ENCODE measurements at regions of chr4 and their contacts with region 1.

Region 1: DNA sequence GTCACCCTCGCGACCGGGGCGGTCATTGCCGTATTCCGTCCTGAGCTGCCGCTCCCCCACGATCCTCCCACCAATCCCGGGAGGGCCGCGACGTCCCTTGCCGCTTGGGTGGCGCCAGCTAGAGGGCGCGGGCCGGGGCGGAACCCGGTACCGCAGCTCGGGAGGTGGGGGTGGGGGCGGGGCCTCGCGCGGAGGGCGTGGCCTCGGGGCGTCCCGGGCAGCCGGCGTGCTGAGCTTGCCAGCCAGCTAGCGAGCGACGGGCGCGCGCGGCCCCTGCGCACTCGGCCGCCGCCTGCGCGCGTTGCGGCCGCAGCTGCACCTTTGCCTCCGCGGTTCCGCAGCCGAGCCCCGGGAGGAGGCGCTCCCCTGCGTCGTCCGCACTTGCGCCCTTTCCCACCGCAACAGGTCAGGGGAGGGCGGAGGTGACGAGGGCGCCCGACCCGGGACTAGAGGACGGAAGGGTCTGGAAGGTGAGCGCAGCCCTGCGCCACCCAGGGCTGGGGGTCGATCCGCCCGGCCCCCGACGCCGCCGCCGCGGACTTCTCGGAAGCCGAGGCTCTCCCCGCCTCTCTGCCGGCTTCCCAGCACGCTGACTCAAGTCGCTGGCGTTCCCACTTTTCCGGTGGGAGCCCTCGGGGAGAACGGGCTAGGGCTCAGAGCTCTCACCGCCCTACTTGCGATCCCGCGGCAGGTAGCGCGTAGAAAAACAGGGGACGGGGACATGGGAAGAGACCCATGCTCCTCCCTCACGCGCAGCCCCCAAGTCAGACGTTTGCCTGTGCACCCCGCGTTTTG is at the start of gene AFF1:
- DNase-seq: peak; percentile 79
- ATAC-seq: peak; percentile 71
- H3K4me3 Mint-ChIP-seq: peak within 1 kb of the TSS; percentile 94
- H3K27ac Mint-ChIP-seq: peak within 1 kb of the TSS; percentile 96
- H3K4me1 Mint-ChIP-seq: peaks cover 56% of the 10 kb centered on the region
- H3K27me3 Mint-ChIP-seq: no peaks in the 10 kb centered on the region
- CTCF ChIP-seq: no peak
- total RNA-seq, gene AFF1: 60.0 and 60.8 TPM in 2 replicates

Region 2: GRCh38 chr4:86961605-86962295 is 26.8 kb after region 1 on chr4:
- CTCF ChIA-PET with region 1: interaction called, 6 read pairs
- POLR2A ChIA-PET with region 1: interaction called, 22 read pairs
- intact Hi-C with region 1: loop called (anchors 1 kb)
- DNase-seq: no peak
- ATAC-seq: peak; percentile 89
- H3K4me3 Mint-ChIP-seq: peak overlapping the region; percentile 33
- H3K27ac Mint-ChIP-seq: peak overlapping the region; percentile 82
- H3K4me1 Mint-ChIP-seq: peaks cover 50% of the 10 kb centered on the region
- H3K27me3 Mint-ChIP-seq: no peaks in the 10 kb centered on the region
- CTCF ChIP-seq: no peak

Region 3: DNA sequence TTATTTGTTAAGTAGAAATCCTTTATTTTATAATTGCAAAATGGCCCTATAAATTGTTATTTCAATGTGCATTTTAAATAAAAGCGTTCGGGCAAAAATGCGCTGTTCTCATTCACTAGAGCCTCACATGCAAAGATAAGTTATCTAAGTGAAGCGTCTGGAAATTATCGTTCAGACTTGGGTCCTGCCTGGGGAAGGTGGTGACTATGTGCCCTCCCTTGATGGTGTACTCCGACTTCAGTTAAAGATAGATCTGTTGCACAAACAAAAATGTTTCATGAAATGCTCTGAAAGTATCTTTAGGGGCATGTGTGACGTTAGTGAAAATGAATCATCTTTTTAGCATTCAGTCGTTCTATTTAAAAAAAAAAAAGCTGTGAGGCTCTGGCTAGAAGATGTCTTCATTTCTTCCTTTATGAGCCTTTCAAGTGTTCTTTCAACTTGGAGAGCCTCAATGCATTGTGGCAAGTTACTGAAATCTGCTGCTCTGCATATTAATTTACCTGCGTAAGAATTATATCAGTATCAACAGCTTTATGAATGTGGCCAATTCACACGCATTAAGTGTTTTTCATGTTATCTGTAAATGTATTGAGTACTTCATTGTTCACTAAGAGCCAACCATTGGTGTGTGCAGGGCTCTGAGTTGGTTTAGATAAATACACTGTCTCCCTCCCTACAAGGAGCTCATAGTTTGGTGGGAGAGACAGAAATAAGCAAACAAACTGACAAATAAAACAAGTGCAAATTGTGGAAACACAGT is 82.8 kb after region 1 on chr4:
- CTCF ChIA-PET with region 1: no interaction called
- POLR2A ChIA-PET with region 1: interaction called, 17 read pairs
- intact Hi-C with region 1: no loop called
- DNase-seq: no peak
- ATAC-seq: no peak
- H3K4me3 Mint-ChIP-seq: peak overlapping the region; percentile 24
- H3K27ac Mint-ChIP-seq: peak overlapping the region; percentile 88
- H3K4me1 Mint-ChIP-seq: peaks cover 86% of the 10 kb centered on the region
- H3K27me3 Mint-ChIP-seq: no peaks in the 10 kb centered on the region
- CTCF ChIP-seq: no peak

Region 4: GRCh38 chr4:87093443-87094123 is 158.6 kb after region 1 on chr4:
- CTCF ChIA-PET with region 1: interaction called, 64 read pairs
- POLR2A ChIA-PET with region 1: interaction called, 9 read pairs
- intact Hi-C with region 1: loop called (anchors 1 kb)
- DNase-seq: no peak
- ATAC-seq: peak; percentile 89
- H3K4me3 Mint-ChIP-seq: no peak overlapping the region
- H3K27ac Mint-ChIP-seq: peak overlapping the region; percentile 62
- H3K4me1 Mint-ChIP-seq: peaks cover 20% of the 10 kb centered on the region
- H3K27me3 Mint-ChIP-seq: no peaks in the 10 kb centered on the region
- CTCF ChIP-seq: peak; percentile 15

Region 5: DNA sequence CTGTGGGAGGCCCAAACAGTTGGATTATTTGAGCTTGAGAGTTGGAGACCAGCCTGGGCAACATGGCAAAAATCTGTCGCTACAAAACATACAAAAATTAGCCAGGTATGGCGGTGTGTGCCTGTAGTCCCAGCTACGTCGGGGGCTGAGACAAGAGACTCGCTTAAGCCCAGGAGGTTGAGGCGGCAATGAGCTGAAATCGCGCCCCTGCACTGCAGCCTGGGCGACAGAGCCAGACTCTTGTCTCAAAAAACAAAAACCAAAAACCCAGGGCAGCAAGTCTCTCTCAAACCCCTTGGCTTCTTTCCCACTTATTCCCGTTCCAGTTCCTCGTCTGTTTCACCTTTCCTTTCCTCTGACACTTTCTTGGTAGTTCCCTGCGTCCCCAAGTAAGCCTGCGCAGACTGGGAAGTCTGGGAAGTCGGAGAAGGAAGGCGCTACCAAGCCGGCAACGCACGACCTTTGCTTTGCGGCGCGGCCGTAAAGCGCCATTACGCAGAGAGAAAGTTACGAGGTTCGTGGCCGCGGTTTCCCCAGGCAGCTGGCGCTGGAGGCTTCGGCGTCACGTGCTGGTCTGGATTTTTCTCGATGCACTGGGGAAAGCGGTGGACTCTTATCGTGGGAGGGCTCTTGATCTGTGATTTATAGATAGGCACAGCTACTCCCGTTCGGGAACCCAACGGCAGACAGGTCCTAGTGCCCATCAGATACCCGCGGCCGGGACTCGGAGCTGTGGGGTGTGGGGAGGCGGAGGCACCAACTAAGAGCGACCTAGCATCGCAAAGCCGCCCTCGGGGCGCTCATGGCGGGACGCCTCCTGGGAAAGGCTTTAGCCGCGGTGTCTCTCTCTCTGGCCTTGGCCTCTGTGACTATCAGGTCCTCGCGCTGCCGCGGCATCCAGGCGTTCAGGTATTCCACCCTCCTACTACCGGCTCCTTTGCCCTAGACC is 487.4 kb after region 1 on chr4 and contains the start of gene NUDT9:
- CTCF ChIA-PET with region 1: no interaction called
- POLR2A ChIA-PET with region 1: interaction called, 3 read pairs
- intact Hi-C with region 1: loop called (anchors 2 kb)
- DNase-seq: peak; percentile 80
- ATAC-seq: peak; percentile 86
- H3K4me3 Mint-ChIP-seq: peak within 1 kb of the TSS; percentile 100
- H3K27ac Mint-ChIP-seq: peak within 1 kb of the TSS; percentile 99
- H3K4me1 Mint-ChIP-seq: peaks cover 40% of the 10 kb centered on the region
- H3K27me3 Mint-ChIP-seq: no peaks in the 10 kb centered on the region
- CTCF ChIP-seq: no peak
- total RNA-seq, gene NUDT9: 18.5 and 21.1 TPM in 2 replicates